CD4-positive, alpha-beta memory T cell (primary cell): ENCODE measurements at regions of chr20 and their contacts with region 1.

Region 1: DNA sequence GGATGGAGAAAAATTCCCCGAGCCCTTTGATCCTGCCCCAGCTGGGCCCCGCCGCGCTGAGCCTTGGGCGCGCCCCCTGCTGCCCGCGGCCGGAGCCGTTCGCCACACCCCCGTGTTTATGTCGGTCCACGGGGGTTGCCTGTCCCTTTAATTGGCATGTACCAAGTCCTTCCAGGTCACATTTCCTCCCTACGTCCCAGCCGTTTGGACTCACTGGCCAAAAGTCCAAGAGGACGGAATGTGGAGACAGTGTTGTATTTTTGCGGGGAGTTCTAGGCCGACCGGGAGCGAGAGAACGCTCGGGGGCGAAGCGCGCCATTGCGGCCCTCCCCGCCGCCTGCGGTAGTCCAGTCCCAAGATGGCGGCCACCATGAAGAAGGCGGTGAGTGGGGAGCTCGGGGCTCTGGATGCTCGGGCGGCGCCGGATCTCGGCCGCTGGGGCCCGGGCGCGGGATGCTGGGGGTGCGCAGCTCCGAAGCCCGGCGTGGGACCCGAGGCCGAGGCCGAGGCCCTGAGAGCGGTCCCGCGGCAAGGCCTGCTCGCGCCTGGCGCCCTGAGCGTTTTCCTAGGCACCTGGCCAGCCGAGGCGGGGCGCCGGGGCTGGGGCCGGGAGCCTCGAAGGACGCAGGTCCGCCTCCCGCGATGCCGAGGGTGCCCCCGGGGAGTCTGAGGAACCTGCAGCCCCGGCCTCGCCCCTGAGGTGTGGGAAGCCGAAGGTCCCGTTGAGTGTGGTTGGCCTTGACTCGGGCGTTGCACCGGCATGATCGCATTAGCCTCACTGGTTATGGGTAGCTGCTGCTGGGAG is at the start of gene PFDN4:
- DNase-seq: peak; percentile 72 to 88 (median 79)
- H3K4me3 ChIP-seq: peak within 1 kb of the TSS; percentile 92 to 96
- H3K4me3 Mint-ChIP-seq: peak within 1 kb of the TSS; percentile 94 to 99 (median 98)
- H3K27ac ChIP-seq: peak within 1 kb of the TSS; percentile 92
- H3K27ac Mint-ChIP-seq: peak within 1 kb of the TSS; percentile 99 to 100 (median 100)
- H3K4me1 ChIP-seq: peaks cover 33% of the 10 kb centered on the region
- H3K4me1 Mint-ChIP-seq: peaks cover 28 to 42% (median 34%) of the 10 kb centered on the region in 4 donors
- H3K27me3 ChIP-seq: no peaks in the 10 kb centered on the region
- H3K27me3 Mint-ChIP-seq: peaks cover 0 to 2% of the 10 kb centered on the region in 2 donors
- total RNA-seq, gene PFDN4: 15.2 to 16.7 TPM

Region 2: DNA sequence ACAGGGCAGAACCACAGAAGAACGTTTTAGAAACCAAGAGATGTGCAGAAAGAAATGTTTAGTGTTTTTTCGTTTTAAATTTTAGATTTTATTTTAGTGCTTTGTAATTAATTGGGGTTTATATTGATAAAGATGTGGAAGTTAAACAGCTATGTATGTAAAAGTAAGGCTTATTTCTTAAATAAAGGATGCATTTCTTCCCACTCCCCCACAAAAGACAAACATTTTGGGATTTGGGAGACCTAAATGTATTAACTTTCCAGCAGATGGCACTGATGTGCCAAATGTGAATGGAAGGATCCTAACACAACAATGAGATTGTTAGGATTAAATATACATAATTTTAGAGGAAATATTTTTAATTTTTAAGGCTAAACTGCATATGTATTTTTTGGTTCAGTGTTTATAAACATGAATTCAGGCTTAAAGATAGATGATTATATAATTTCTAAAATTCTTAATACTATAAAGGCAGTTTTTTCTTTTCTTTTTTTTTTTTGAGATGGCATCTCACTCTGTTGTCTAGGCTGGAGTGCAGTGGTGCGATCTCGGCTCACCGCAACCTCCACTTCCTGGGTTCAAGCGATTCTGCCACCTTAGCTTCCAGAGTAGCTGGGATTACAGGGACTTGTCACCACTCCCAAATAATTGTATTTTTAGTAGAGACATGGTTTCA is 11.9 kb after region 1 on chr20:
- CTCF ChIA-PET with region 1: interaction called, 11 read pairs
- POLR2A ChIA-PET with region 1: interaction called, 16 read pairs
- intact Hi-C with region 1: no loop called
- DNase-seq: no peak
- H3K4me3 ChIP-seq: no peak overlapping the region
- H3K4me3 Mint-ChIP-seq: no peak overlapping the region
- H3K27ac ChIP-seq: no peak overlapping the region
- H3K27ac Mint-ChIP-seq: peak overlapping the region in 1 of 7 donors; percentile 66
- H3K4me1 ChIP-seq: peaks cover 16% of the 10 kb centered on the region
- H3K4me1 Mint-ChIP-seq: peaks cover 11 to 23% (median 17%) of the 10 kb centered on the region in 4 donors
- H3K27me3 ChIP-seq: no peaks in the 10 kb centered on the region
- H3K27me3 Mint-ChIP-seq: no peaks in the 10 kb centered on the region